Endothelial cell of umbilical vein (primary cell): ENCODE measurements at regions of chr2 and their contacts with region 1.

Region 1: GRCh38 chr2:204452464-204453023 is 92.7 kb upstream of the PARD3B start:
- DNase-seq: peak; percentile 99
- H3K4me3 ChIP-seq: no peak overlapping the region
- H3K27ac ChIP-seq: peak overlapping the region; percentile 92
- H3K4me1 ChIP-seq: peaks cover 24% of the 10 kb centered on the region
- H3K27me3 ChIP-seq: no peaks in the 10 kb centered on the region
- CTCF ChIP-seq: no peak
- POLR2A ChIP-seq: no peak

Region 2: DNA sequence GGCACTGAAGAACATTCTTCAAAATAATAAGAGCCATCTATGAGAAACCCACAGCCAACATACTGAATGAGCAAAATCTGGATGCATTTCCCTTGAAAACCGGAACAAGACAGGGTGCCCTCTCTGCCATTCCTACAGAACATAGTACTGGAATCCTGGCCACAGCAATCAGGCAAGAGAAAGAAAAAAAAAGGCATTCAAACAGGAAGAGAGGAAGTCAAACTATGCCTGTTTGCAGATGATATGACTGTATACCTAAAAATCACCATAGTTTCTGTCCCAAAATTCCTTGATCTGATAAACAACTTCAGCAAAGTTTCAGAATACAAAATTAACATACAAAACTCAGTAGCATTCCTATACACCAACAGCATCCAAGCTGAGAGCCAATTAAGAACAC is 26.7 kb before region 1 on chr2:
- CTCF ChIA-PET with region 1: no interaction called
- POLR2A ChIA-PET with region 1: no interaction called
- dilution Hi-C with region 1: no loop called
- intact Hi-C with region 1: loop called (anchors 1 kb)
- DNase-seq: peak; percentile 90
- H3K4me3 ChIP-seq: no peak overlapping the region
- H3K27ac ChIP-seq: peak overlapping the region; percentile 48
- H3K4me1 ChIP-seq: peaks cover 10% of the 10 kb centered on the region
- H3K27me3 ChIP-seq: no peaks in the 10 kb centered on the region
- CTCF ChIP-seq: no peak
- POLR2A ChIP-seq: no peak

Region 3: DNA sequence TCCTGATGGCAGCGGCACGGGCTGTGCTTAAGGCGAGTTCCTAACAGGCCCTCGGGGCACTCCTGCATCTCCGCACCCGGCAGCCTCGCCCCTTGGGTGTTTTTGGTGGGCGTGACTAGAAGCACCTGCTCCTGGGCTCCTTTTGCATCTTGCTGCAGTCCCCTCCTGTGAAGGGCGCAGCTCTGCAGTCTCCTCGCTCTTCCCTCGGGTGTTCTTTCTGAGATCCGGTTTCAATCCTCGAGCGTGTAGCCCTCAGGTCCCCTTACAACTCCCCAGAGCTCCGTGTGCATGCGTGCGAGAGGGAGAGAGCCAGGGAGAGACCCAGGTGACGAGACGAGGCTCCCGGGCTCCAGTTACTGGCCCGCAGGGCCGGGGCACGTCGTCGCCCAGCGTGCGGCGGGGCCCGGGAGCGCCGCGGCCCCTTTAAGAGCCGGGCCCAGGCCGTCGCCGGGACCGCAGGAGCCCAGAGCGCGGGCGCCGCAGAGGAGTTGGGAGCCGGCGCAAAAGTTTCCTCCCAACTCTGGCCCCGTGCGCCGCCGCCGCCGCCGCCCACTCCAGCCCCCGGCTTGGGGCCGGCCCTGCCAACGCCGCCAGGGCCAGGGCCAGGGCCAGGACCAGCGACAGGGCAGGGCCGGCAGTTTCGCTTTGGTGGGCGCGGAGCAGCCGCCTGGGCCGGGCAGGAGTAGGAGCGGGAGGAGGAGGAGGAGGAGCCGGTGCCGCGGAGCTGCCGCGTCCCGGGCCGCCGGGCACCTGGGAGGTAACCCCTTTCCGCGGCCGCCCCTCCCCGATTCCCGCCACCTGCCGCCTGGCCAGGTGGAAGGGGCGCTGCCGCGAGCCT is 92.7 kb after region 1 on chr2 and contains the start of gene PARD3B:
- CTCF ChIA-PET with region 1: no interaction called
- POLR2A ChIA-PET with region 1: no interaction called
- dilution Hi-C with region 1: no loop called
- intact Hi-C with region 1: loop called (anchors 1 kb)
- DNase-seq: peak; percentile 74
- H3K4me3 ChIP-seq: peak within 1 kb of the TSS; percentile 78 to 90 (median 87)
- H3K27ac ChIP-seq: peak within 1 kb of the TSS; percentile 67
- H3K4me1 ChIP-seq: peaks cover 22% of the 10 kb centered on the region
- H3K27me3 ChIP-seq: no peaks in the 10 kb centered on the region
- CTCF ChIP-seq: no peak
- POLR2A ChIP-seq: no peak
- total RNA-seq, gene PARD3B: 17.7 and 30.9 TPM in 2 replicates

Region 4: GRCh38 chr2:204561749-204562148 is 109.2 kb after region 1 on chr2:
- CTCF ChIA-PET with region 1: no interaction called
- POLR2A ChIA-PET with region 1: no interaction called
- dilution Hi-C with region 1: no loop called
- intact Hi-C with region 1: no loop called
- DNase-seq: no peak
- H3K4me3 ChIP-seq: no peak overlapping the region
- H3K27ac ChIP-seq: no peak overlapping the region
- H3K4me1 ChIP-seq: no peaks in the 10 kb centered on the region
- H3K27me3 ChIP-seq: no peaks in the 10 kb centered on the region
- CTCF ChIP-seq: no peak
- POLR2A ChIP-seq: no peak

Region 5: GRCh38 chr2:204615456-204615855 is 162.9 kb after region 1 on chr2:
- CTCF ChIA-PET with region 1: no interaction called
- POLR2A ChIA-PET with region 1: no interaction called
- dilution Hi-C with region 1: no loop called
- intact Hi-C with region 1: no loop called
- DNase-seq: no peak
- H3K4me3 ChIP-seq: no peak overlapping the region
- H3K27ac ChIP-seq: no peak overlapping the region
- H3K4me1 ChIP-seq: peaks cover 7% of the 10 kb centered on the region
- H3K27me3 ChIP-seq: no peaks in the 10 kb centered on the region
- CTCF ChIP-seq: no peak
- POLR2A ChIP-seq: no peak

Region 6: GRCh38 chr2:204691911-204692510 is 239.5 kb after region 1 on chr2:
- CTCF ChIA-PET with region 1: interaction called, 12 read pairs
- POLR2A ChIA-PET with region 1: no interaction called
- dilution Hi-C with region 1: no loop called
- intact Hi-C with region 1: loop called (anchors 1 kb)
- DNase-seq: peak; percentile 90
- H3K4me3 ChIP-seq: no peak overlapping the region
- H3K27ac ChIP-seq: peak overlapping the region; percentile 36
- H3K4me1 ChIP-seq: peaks cover 18% of the 10 kb centered on the region
- H3K27me3 ChIP-seq: no peaks in the 10 kb centered on the region
- CTCF ChIP-seq: peak; percentile 68 to 72
- POLR2A ChIP-seq: no peak

Region 7: GRCh38 chr2:204842661-204843485 is 390.3 kb after region 1 on chr2:
- CTCF ChIA-PET with region 1: no interaction called
- POLR2A ChIA-PET with region 1: no interaction called
- dilution Hi-C with region 1: no loop called
- intact Hi-C with region 1: loop called (anchors 2 kb)
- DNase-seq: peak; percentile 92
- H3K4me3 ChIP-seq: peak overlapping the region in 1 of 3 experiments; percentile 15
- H3K27ac ChIP-seq: peak overlapping the region; percentile 84
- H3K4me1 ChIP-seq: peaks cover 25% of the 10 kb centered on the region
- H3K27me3 ChIP-seq: no peaks in the 10 kb centered on the region
- CTCF ChIP-seq: no peak
- POLR2A ChIP-seq: no peak